ENCODE measurements at regions of chr15 and their contacts with region 1.

Region 1: DNA sequence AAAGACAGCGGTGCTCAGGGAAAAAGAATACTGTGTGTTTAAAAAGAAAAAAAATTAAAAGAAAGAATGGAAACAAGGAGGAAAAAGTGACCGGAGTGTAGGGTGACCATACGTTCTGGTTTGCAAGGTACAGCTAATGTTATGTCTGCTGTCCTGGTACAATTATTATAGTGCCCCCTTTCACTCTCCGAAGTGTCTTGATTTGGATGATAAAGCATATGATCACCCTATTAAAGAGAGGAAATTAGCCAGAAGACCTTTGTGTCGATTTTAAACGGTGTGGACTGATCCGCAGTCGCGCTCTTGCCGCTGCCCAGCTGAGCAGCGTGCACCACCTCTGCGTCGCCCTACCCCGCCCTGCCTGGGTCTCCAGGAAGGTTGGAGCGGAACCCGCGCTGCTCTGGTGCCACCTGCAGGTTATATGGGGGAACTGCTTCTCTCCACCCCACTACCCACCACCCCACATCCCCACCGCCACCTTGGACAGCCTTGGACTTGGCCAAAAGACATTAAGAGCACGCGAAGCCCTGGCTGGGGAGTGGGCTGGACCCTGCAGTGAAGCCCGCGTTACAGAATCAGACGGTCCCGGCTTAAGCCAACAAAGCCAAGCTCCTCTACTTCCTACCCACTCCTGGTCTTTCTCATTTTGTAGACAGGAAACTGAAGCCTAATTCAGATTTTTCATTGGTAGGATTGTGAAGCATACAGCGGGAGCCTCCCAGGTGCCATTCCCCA is 41.2 kb upstream of the UBE2Q2 start:
- DNase-seq: peak; percentile 87 to 92 (median 90)
- ATAC-seq: peak; percentile 100
- H3K4me3 ChIP-seq: 0 out of 2 replicates have a peak overlapping the region, but pooled peaks have one; percentile 9
- H3K27ac ChIP-seq: no peak overlapping the region
- H3K4me1 ChIP-seq: peaks cover 7 to 11% of the 10 kb centered on the region in 2 experiments; a peak in 4 of 5 replicates
- H3K27me3 ChIP-seq: peaks cover under 1 to 4% of the 10 kb centered on the region in 2 experiments; a peak in 1 of 5 replicates
- CTCF ChIP-seq: peak; percentile 75 to 91 (median 89)
- EP300 ChIP-seq: no peak
- POLR2A ChIP-seq: no peak
- RAD21 ChIP-seq: peak; percentile 87 to 89

Region 2: GRCh38 chr15:75732809-75733451 is 69.1 kb before region 1 on chr15:
- CTCF ChIA-PET with region 1: interaction called, 6 read pairs
- POLR2A ChIA-PET with region 1: no interaction called
- in situ Hi-C with region 1: no loop called
- intact Hi-C with region 1: loop called (anchors 1 kb)
- DNase-seq: peak; percentile 69 to 79 (median 70)
- ATAC-seq: peak; percentile 91
- H3K4me3 ChIP-seq: no peak overlapping the region
- H3K27ac ChIP-seq: no peak overlapping the region
- H3K4me1 ChIP-seq: peaks cover 3 to 30% of the 10 kb centered on the region in 2 experiments
- H3K27me3 ChIP-seq: 0 out of 5 replicates have a peak, but pooled peaks cover 0 to 5% of the 10 kb centered on the region in 2 experiments
- CTCF ChIP-seq: peak; percentile 79 to 90 (median 82)
- EP300 ChIP-seq: no peak
- POLR2A ChIP-seq: no peak
- RAD21 ChIP-seq: peak; percentile 42 to 70

Region 3: DNA sequence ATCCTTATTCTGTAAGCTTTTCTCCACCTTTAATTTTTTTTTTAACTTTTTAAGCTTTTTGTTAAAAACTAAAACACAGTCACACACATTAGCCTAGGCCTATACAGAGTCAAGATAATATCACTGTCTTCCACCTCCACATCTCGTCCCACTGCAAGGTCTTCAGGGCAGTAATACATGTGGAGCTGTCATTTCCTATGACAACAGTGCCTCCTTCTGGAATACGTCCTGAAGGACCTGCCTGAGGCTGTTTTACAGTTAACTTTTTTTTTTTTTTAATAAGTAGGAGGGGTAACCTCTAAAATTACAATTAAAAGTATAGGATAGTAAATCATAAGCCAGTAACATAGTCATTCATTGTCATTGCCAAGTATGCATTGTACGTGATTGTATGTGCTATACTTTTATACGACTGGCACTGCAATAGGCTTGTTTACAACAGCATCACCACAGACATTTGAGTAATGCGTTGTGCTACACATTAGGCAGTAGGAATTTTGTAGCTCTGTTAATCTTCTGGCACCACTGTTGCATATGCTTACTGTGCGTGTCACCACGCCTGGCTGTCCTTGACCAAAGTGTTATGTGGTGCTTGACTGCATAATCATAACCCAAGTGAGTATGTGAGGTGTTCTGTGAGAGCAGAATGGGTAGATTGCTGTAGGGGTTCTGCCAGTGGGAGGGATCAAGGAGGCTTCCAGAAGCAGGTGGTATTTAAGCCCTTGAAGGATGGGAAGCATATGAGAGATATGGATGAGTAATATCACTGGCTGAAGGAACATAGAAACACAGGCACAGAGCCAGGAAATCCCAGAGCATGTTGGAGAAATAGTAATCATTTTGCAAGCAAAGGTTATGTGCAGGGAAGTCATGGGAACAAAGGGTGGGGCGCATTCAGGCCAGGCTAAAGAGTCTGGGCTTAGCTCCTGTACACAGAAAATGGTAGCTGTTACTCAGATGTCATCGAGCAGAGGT is 120.0 kb after region 1 on chr15:
- CTCF ChIA-PET with region 1: interaction called, 4 read pairs
- POLR2A ChIA-PET with region 1: no interaction called
- in situ Hi-C with region 1: no loop called
- intact Hi-C with region 1: loop called (anchors 2 kb)
- DNase-seq: peak in 2 of 4 experiments; percentile 38 to 84
- ATAC-seq: peak; percentile 99
- H3K4me3 ChIP-seq: no peak overlapping the region
- H3K27ac ChIP-seq: no peak overlapping the region
- H3K4me1 ChIP-seq: no peaks in the 10 kb centered on the region
- H3K27me3 ChIP-seq: no peaks in the 10 kb centered on the region
- CTCF ChIP-seq: peak; percentile 71 to 86 (median 72)
- EP300 ChIP-seq: no peak
- POLR2A ChIP-seq: no peak
- RAD21 ChIP-seq: peak; percentile 86 to 94